Activated CD8-positive, alpha-beta memory T cell treated with anti-CD3 and anti-CD28 coated beads, Interleukin-2, amount 10 ng/mL, durations not matched to agents 7 days and 5 days (primary cell): ENCODE measurements at regions of chr17 and their contacts with region 1.

Region 1: GRCh38 chr17:29574732-29575504 is 6.4 kb downstream of the TP53I13 start:
- DNase-seq: no peak
- ATAC-seq: no peak
- H3K4me3 Mint-ChIP-seq: no peak overlapping the region
- H3K27ac Mint-ChIP-seq: peak overlapping the region; percentile 25
- H3K4me1 Mint-ChIP-seq: peaks cover 5% of the 10 kb centered on the region
- H3K27me3 Mint-ChIP-seq: no peaks in the 10 kb centered on the region

Region 2: GRCh38 chr17:29589524-29590410 is 14.8 kb after region 1 on chr17 and contains the start of gene GIT1:
- CTCF ChIA-PET with region 1: interaction called, 94 read pairs
- DNase-seq: peak; percentile 87
- ATAC-seq: peak; percentile 75
- H3K4me3 Mint-ChIP-seq: peak within 1 kb of the TSS; percentile 87
- H3K27ac Mint-ChIP-seq: peak within 1 kb of the TSS; percentile 88
- H3K4me1 Mint-ChIP-seq: peaks cover 75% of the 10 kb centered on the region
- H3K27me3 Mint-ChIP-seq: no peaks in the 10 kb centered on the region
- total RNA-seq, gene GIT1: 69.5 to 79.5 TPM

Region 3: GRCh38 chr17:29771551-29771950 is 196.6 kb after region 1 on chr17:
- CTCF ChIA-PET with region 1: no interaction called
- DNase-seq: no peak
- ATAC-seq: no peak
- H3K4me3 Mint-ChIP-seq: no peak overlapping the region
- H3K27ac Mint-ChIP-seq: no peak overlapping the region
- H3K4me1 Mint-ChIP-seq: no peaks in the 10 kb centered on the region
- H3K27me3 Mint-ChIP-seq: no peaks in the 10 kb centered on the region